ENCODE measurements at regions of chr16 and their contacts with region 1.

Region 1: GRCh38 chr16:67935402-67936123 is 1.1 kb downstream of the PSMB10 start:
- DNase-seq: peak; percentile 84 to 98
- ATAC-seq: peak; percentile 90 to 97 (median 93)
- H3K4me3 ChIP-seq: peak overlapping the region; percentile 100
- H3K4me3 Mint-ChIP-seq: peak overlapping the region; percentile 98
- H3K27ac ChIP-seq: peak overlapping the region; percentile 73
- H3K27ac Mint-ChIP-seq: peak overlapping the region; percentile 98
- H3K4me1 ChIP-seq: peaks cover 47% of the 10 kb centered on the region
- H3K4me1 Mint-ChIP-seq: peaks cover 37 to 45% of the 10 kb centered on the region in 2 donors
- H3K27me3 ChIP-seq: no peaks in the 10 kb centered on the region
- H3K27me3 Mint-ChIP-seq: no peaks in the 10 kb centered on the region
- CTCF ChIP-seq: no peak

Region 2: DNA sequence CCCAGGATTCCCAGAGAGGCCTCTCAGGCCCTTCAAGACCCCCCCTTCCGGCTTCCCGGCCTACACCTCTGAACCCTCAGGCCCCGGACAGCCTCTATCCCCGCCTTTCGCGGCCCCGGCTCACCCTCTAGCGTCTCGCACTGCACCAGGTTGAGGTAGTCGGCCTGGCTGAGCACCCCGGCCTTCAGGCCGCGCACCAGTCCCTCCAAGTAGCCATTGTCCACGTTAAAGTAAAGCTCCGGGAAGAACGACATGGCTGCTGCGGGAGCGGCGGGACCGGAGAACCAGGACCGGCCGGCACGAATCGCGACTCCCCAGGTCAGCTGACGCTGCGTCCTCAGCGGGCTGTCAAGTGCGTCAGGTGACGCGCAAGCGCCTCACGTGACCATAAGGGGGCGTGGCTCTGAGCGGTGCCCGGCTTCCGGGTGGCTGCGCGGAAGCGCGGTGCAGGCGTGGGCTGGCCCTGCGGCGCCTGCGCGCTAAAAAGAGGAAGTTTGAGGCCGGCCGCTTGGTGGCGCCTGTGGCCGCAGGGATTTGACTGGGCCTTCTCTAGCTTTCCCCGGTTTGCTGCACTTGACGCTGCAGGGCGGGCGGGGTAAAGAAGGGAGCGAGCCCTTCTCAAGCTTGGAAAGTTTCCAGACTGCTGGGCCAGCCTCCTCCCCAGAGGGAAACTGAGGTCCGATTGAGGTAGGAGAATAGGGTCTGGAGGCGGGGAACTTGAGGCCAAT is 454.6 kb before region 1 on chr16 and contains the start of gene ATP6V0D1:
- intact Hi-C with region 1: loop called (anchors 5 kb)
- DNase-seq: peak; percentile 100
- ATAC-seq: peak; percentile 81 to 97 (median 91)
- H3K4me3 ChIP-seq: peak within 1 kb of the TSS; percentile 87
- H3K4me3 Mint-ChIP-seq: peak within 1 kb of the TSS; percentile 100
- H3K27ac ChIP-seq: peak within 1 kb of the TSS; percentile 96
- H3K27ac Mint-ChIP-seq: peak within 1 kb of the TSS; percentile 100
- H3K4me1 ChIP-seq: peaks cover 42% of the 10 kb centered on the region
- H3K4me1 Mint-ChIP-seq: peaks cover 37 to 55% of the 10 kb centered on the region in 2 donors
- H3K27me3 ChIP-seq: no peaks in the 10 kb centered on the region
- H3K27me3 Mint-ChIP-seq: no peaks in the 10 kb centered on the region
- CTCF ChIP-seq: peak; percentile 80
- total RNA-seq, gene ATP6V0D1: 76.0 to 84.9 (median 83.3) TPM

Region 3: GRCh38 chr16:67841764-67842508 is 93.6 kb before region 1 on chr16 and contains the start of gene THAP11:
- intact Hi-C with region 1: loop called (anchors 5 kb)
- DNase-seq: peak; percentile 92 to 98
- ATAC-seq: peak; percentile 63 to 83 (median 67)
- H3K4me3 ChIP-seq: peak within 1 kb of the TSS; percentile 88
- H3K4me3 Mint-ChIP-seq: peak within 1 kb of the TSS; percentile 94
- H3K27ac ChIP-seq: peak within 1 kb of the TSS; percentile 96
- H3K27ac Mint-ChIP-seq: peak within 1 kb of the TSS; percentile 89 to 93
- H3K4me1 ChIP-seq: peaks cover 45% of the 10 kb centered on the region
- H3K4me1 Mint-ChIP-seq: peaks cover 33 to 34% of the 10 kb centered on the region in 2 donors
- H3K27me3 ChIP-seq: no peaks in the 10 kb centered on the region
- H3K27me3 Mint-ChIP-seq: no peaks in the 10 kb centered on the region
- CTCF ChIP-seq: peak; percentile 80
- total RNA-seq, gene THAP11: 25.5 to 35.8 (median 30.3) TPM

Region 4: DNA sequence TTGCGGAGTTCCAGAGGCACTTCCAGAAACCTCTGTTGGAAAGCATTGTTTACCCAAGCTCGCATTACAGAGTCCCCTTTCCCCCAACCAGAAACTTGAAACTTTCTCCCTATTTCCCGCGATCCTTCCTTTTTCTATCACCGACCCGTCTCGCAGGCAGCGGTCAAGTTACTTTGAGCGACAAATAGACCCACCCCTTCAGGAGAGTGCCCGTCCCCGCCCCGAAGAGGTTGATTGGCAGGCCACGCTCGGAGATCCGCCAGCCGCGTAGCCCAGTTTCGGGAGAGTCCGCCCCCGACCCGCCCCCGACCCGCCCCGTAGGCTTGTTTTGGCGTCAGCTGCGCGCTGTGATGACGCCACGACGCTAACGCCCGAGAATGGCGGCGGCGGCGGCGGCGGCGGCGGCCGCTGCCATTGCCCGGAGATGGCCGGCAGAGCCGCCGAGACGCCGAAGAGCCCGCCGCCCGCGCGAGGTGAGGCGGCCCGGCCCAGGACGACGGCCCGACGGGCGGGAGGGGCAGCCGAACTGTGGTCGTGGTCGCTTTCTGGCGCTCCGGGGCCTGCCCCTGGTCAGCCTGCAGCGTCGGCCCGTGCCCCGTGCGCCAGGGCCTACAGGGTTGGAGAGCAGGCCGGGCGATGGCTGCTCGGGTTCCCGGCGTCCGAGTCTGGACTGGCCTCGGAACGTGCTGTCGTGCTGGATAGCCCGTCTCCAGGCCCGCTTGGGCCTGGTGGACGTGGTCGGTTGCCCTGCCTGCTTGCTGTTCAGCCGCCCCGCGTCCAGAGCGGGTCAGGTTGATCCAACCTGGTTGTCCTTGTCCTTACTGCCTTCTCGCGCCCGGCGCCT is 42.4 kb before region 1 on chr16 and contains the start of gene PSKH1:
- intact Hi-C with region 1: loop called (anchors 2 kb)
- DNase-seq: peak; percentile 86 to 96
- ATAC-seq: peak; percentile 98 to 99 (median 98)
- H3K4me3 ChIP-seq: peak within 1 kb of the TSS; percentile 65
- H3K4me3 Mint-ChIP-seq: peak within 1 kb of the TSS; percentile 96
- H3K27ac ChIP-seq: peak within 1 kb of the TSS; percentile 83
- H3K27ac Mint-ChIP-seq: peak within 1 kb of the TSS; percentile 91 to 95
- H3K4me1 ChIP-seq: peaks cover 17% of the 10 kb centered on the region
- H3K4me1 Mint-ChIP-seq: peaks cover 28 to 31% of the 10 kb centered on the region in 2 donors
- H3K27me3 ChIP-seq: no peaks in the 10 kb centered on the region
- H3K27me3 Mint-ChIP-seq: no peaks in the 10 kb centered on the region
- CTCF ChIP-seq: no peak
- total RNA-seq, gene PSKH1: 16.8 to 24.7 (median 19.5) TPM

Region 5: GRCh38 chr16:67917852-67918236 is 17.7 kb before region 1 on chr16:
- intact Hi-C with region 1: no loop called
- DNase-seq: no peak
- ATAC-seq: peak in 1 of 3 donors; percentile 57
- H3K4me3 ChIP-seq: no peak overlapping the region
- H3K4me3 Mint-ChIP-seq: no peak overlapping the region
- H3K27ac ChIP-seq: no peak overlapping the region
- H3K27ac Mint-ChIP-seq: peak overlapping the region in 1 of 2 donors; percentile 60
- H3K4me1 ChIP-seq: no peaks in the 10 kb centered on the region
- H3K4me1 Mint-ChIP-seq: peaks cover 22 to 30% of the 10 kb centered on the region in 2 donors
- H3K27me3 ChIP-seq: no peaks in the 10 kb centered on the region
- H3K27me3 Mint-ChIP-seq: no peaks in the 10 kb centered on the region
- CTCF ChIP-seq: no peak

Region 6: GRCh38 chr16:67968400-67969253 is 33.1 kb after region 1 on chr16 and contains the start of gene SLC12A4:
- intact Hi-C with region 1: loop called (anchors 2 kb)
- DNase-seq: peak; percentile 86 to 91
- ATAC-seq: peak; percentile 90 to 95 (median 91)
- H3K4me3 ChIP-seq: peak within 1 kb of the TSS; percentile 80
- H3K4me3 Mint-ChIP-seq: peak within 1 kb of the TSS; percentile 96
- H3K27ac ChIP-seq: peak within 1 kb of the TSS; percentile 68
- H3K27ac Mint-ChIP-seq: peak within 1 kb of the TSS; percentile 77 to 89
- H3K4me1 ChIP-seq: peaks cover 27% of the 10 kb centered on the region
- H3K4me1 Mint-ChIP-seq: peaks cover 17 to 22% of the 10 kb centered on the region in 2 donors
- H3K27me3 ChIP-seq: no peaks in the 10 kb centered on the region
- H3K27me3 Mint-ChIP-seq: no peaks in the 10 kb centered on the region
- CTCF ChIP-seq: no peak
- total RNA-seq, gene SLC12A4: 30.0 to 47.0 (median 30.5) TPM

Region 7: DNA sequence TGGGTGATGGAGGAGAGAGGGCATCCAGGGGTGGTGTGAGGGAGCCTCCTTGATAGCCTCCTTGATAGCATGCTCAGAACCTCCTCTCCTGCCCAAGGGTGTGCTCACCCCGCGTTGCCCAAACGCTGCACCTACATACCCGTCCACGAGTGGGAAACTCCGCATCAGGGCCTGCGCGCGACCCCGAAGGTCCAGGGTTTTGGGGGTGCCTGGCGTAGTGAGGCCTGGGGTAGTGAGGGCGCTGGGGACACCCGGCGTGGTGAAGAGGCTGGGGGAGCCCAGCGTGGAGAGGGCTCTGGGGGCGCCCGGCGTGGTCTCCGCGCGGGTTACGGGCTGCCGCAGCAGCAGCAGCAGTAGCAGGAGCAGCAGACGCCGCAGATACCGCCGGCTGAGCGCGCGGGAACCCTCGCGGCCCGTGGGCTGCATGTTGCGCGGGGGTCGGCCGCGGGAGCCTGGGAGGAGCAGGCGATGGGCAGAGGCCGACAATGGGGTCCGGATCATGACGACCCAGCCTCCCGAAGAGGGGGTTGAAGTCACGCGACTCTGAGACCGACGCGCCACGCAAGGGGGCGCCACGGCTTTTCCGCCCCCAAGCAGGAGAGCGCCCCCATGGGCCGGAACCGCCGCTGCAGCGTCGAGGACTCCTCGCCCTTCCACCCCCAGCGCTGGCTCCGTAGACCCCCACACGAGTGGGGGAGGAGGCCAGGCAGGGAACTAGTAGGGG is 44.6 kb after region 1 on chr16 and contains the start of gene DPEP3:
- intact Hi-C with region 1: no loop called
- DNase-seq: no peak
- ATAC-seq: no peak
- H3K4me3 ChIP-seq: no peak within 1 kb of the TSS
- H3K4me3 Mint-ChIP-seq: no peak within 1 kb of the TSS
- H3K27ac ChIP-seq: no peak within 1 kb of the TSS
- H3K27ac Mint-ChIP-seq: no peak within 1 kb of the TSS
- H3K4me1 ChIP-seq: peaks cover 21% of the 10 kb centered on the region
- H3K4me1 Mint-ChIP-seq: peaks cover 15% of the 10 kb centered on the region in 2 donors
- H3K27me3 ChIP-seq: no peaks in the 10 kb centered on the region
- H3K27me3 Mint-ChIP-seq: no peaks in the 10 kb centered on the region
- CTCF ChIP-seq: peak; percentile 15
- total RNA-seq, gene DPEP3: 0.53 to 1.00 (median 0.96) TPM